Panc1 (cell line): ENCODE measurements at regions of chr18 and their contacts with region 1.

Region 1: DNA sequence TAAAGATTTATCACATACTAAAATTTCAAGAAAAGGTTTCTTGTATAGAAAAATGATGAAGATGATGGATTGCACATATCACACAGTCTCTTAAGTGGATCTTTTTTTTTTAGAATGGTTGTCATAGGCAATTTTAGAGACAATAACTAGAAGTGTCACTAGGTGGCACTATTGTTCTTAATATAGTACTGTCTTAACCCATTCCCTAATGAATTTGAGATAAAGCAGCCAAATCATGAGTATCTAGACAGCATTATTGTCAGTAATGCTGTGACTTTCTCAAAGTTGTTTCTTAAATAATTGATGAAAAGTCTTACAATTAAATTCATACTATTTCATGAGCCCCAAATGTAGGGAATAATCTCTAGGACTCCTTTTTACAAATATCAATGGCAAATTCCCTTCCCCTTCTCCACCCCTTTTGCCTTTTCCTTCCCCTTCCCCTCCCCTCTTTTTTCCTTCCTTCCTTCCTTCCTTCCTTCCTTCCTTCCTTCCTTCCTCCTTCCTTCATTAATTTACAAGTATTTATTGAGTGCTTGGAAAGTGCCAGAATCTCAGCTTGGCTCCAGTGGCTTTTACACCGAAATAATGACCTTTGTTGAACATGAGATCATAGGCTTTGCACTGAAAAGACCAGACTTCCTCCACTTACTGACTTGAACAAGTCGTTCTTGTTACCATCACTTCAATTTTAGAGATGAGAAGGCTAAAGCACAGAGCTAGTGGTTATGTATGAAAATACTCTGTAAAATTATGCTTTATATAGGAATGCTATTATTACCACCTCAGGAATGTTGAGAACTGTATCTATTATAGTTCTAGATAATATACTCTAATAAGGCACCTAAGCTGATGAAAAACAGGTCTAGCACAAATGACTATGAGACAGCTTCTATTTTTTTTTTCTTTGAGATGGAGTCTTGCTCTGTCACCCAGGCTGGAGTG is 19.8 kb downstream of the MYL12B start:
- DNase-seq: peak; percentile 84
- ATAC-seq: peak; percentile 45
- H3K4me3 ChIP-seq: no peak overlapping the region
- H3K27ac ChIP-seq: peak overlapping the region; percentile 100
- H3K4me1 ChIP-seq: peaks cover 61% of the 10 kb centered on the region
- H3K27me3 ChIP-seq: no peaks in the 10 kb centered on the region
- CTCF ChIP-seq: peak; percentile 50; the same call in 1 of the 2 replicates

Region 2: GRCh38 chr18:3354506-3354905 is 72.8 kb after region 1 on chr18:
- CTCF ChIA-PET with region 1: interaction called, 18 read pairs
- POLR2A ChIA-PET with region 1: no interaction called
- in situ Hi-C with region 1: no loop called
- intact Hi-C with region 1: no loop called
- DNase-seq: no peak
- ATAC-seq: no peak
- H3K4me3 ChIP-seq: no peak overlapping the region
- H3K27ac ChIP-seq: peak overlapping the region; percentile 57; the same call in 1 of the 2 replicates
- H3K4me1 ChIP-seq: peaks cover 9% of the 10 kb centered on the region
- H3K27me3 ChIP-seq: no peaks in the 10 kb centered on the region
- CTCF ChIP-seq: no peak

Region 3: GRCh38 chr18:3454365-3455089 is 172.8 kb after region 1 on chr18:
- CTCF ChIA-PET with region 1: no interaction called
- POLR2A ChIA-PET with region 1: interaction called, 11 read pairs
- in situ Hi-C with region 1: no loop called
- intact Hi-C with region 1: loop called (anchors 1 kb)
- DNase-seq: no peak
- ATAC-seq: no peak
- H3K4me3 ChIP-seq: peak overlapping the region; percentile 97 to 98
- H3K27ac ChIP-seq: peak overlapping the region; percentile 100
- H3K4me1 ChIP-seq: peaks cover 49% of the 10 kb centered on the region
- H3K27me3 ChIP-seq: no peaks in the 10 kb centered on the region
- CTCF ChIP-seq: peak; percentile 69; the same call in 1 of the 2 replicates

Region 4: GRCh38 chr18:3593904-3594661 is 312.4 kb after region 1 on chr18:
- CTCF ChIA-PET with region 1: interaction called, 5 read pairs
- POLR2A ChIA-PET with region 1: interaction called, 3 read pairs
- in situ Hi-C with region 1: no loop called
- intact Hi-C with region 1: loop called (anchors 2 kb)
- DNase-seq: peak; percentile 95
- ATAC-seq: peak; percentile 82
- H3K4me3 ChIP-seq: peak overlapping the region; percentile 50 to 86
- H3K27ac ChIP-seq: peak overlapping the region; percentile 96
- H3K4me1 ChIP-seq: peaks cover 73% of the 10 kb centered on the region
- H3K27me3 ChIP-seq: no peaks in the 10 kb centered on the region
- CTCF ChIP-seq: peak; percentile 96

Region 5: GRCh38 chr18:3623769-3624545 is 342.2 kb after region 1 on chr18:
- CTCF ChIA-PET with region 1: no interaction called
- POLR2A ChIA-PET with region 1: interaction called, 21 read pairs
- in situ Hi-C with region 1: no loop called
- intact Hi-C with region 1: no loop called
- DNase-seq: peak; percentile 95
- ATAC-seq: peak; percentile 88
- H3K4me3 ChIP-seq: peak overlapping the region; percentile 2 to 26; a peak in 3 of 4 replicates
- H3K27ac ChIP-seq: peak overlapping the region; percentile 93
- H3K4me1 ChIP-seq: peaks cover 56% of the 10 kb centered on the region
- H3K27me3 ChIP-seq: no peaks in the 10 kb centered on the region
- CTCF ChIP-seq: no peak

Region 6: GRCh38 chr18:3869848-3870247 is 588.1 kb after region 1 on chr18:
- CTCF ChIA-PET with region 1: no interaction called
- POLR2A ChIA-PET with region 1: no interaction called
- in situ Hi-C with region 1: no loop called
- intact Hi-C with region 1: loop called (anchors 5 kb)
- DNase-seq: peak; percentile 25
- ATAC-seq: peak; percentile 95
- H3K4me3 ChIP-seq: no peak overlapping the region
- H3K27ac ChIP-seq: peak overlapping the region; percentile 74; the same call in 1 of the 2 replicates
- H3K4me1 ChIP-seq: peaks cover 9% of the 10 kb centered on the region
- H3K27me3 ChIP-seq: no peaks in the 10 kb centered on the region; the same call in 1 of the 2 replicates
- CTCF ChIP-seq: peak; percentile 60; the same call in 1 of the 2 replicates